ENCODE measurements at regions of chr10 and their contacts with region 1.

Region 1: DNA sequence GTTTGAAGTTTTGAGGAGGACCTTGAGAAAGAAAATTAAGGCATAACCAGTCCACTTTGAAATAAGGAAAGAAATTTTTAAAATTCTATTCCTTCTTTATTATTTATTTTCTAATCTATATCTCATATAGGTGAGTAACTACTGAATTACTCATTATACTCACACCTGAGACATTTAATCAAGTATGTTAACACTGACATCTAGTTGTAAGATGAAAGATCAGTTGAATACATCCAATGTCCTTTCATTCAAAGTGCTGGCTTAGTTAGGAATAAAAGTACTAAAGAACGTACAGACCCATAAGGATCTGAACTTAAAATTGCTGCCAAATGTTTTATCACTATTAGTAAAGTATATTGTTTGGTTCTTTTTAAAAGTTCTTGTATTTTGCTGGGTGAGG is 23.5 kb downstream of the TRDMT1 start:
- DNase-seq: no peak
- ATAC-seq: no peak
- H3K4me3 ChIP-seq: no peak overlapping the region
- H3K27ac ChIP-seq: no peak overlapping the region
- H3K4me1 ChIP-seq: no peaks in the 10 kb centered on the region
- H3K27me3 ChIP-seq: no peaks in the 10 kb centered on the region
- CTCF ChIP-seq: no peak

Region 2: DNA sequence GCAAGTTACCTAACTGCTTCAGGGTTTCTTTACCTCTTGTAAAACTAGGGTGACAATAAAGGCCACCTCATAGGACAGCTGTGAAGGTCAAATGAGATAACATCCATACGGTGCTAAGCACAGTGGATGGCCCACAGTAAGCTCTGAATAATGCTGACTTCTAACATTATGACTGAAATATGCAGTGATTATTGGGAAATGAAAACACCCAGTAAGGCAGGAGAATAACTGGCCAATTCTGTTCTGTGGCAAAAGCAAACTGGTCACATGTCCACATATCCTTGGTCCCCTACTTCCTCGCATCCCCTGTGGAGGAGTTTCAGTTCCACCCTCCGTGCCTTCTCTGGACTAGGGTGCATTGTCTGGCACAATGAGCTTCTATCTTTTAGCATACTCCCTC is 49.7 kb before region 1 on chr10:
- intact Hi-C with region 1: no loop called
- DNase-seq: no peak
- ATAC-seq: no peak
- H3K4me3 ChIP-seq: no peak overlapping the region
- H3K27ac ChIP-seq: no peak overlapping the region
- H3K4me1 ChIP-seq: no peaks in the 10 kb centered on the region
- H3K27me3 ChIP-seq: no peaks in the 10 kb centered on the region
- CTCF ChIP-seq: no peak

Region 3: DNA sequence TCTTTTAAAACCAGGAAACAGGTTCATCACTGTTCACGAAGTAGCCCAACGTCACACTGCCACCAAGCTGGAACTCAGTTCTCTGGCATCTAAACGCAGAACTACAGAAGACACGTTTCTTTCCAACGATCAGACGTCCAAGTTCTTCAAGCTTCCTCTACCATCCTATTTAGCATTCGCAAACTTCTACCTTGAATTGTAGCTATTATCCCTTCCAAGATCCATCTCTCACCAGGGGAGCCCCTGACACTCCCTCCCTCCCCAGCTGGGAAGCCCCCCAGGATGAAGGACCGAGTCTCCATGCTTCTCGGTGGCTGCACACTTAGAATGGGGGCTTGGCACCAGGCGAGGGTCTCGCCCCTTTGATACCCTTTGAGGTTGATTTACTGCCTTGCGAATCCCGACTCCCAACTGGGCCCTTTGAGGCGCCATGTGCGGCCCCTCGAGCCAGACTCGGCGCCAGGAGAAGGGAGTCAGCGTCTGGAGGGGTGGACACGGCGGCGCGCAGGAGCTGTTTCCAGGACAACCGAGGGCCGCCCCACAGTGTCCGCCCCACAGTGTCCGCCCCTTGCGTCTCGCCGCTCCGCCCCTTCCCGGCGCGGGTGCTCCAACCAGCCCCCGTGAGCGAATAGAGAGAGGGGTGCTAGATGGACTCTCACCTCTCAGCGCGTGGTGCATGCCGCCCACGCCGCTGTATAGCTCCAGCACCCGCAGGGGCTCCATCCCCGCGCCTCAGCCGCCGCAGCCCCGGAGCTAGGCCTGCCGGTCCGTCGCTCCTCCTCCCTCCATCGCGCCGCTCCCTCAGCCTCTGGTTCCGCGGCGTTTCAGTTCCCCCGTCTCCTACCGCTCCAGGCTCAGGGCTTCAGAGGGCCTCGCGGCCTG is 23.1 kb after region 1 on chr10 and contains the start of gene TRDMT1:
- intact Hi-C with region 1: loop called in 1 of 2 experiments (anchors 1 kb)
- DNase-seq: peak; percentile 88 to 93
- ATAC-seq: peak; percentile 99 to 100 (median 99)
- H3K4me3 ChIP-seq: peak within 1 kb of the TSS; percentile 94
- H3K27ac ChIP-seq: peak within 1 kb of the TSS; percentile 92
- H3K4me1 ChIP-seq: peaks cover 12% of the 10 kb centered on the region
- H3K27me3 ChIP-seq: no peaks in the 10 kb centered on the region
- CTCF ChIP-seq: no peak
- total RNA-seq, gene TRDMT1: 0.84 to 2.7 (median 1.9) TPM

Region 4: GRCh38 chr10:17725703-17726102 is 547.7 kb after region 1 on chr10:
- intact Hi-C with region 1: no loop called
- DNase-seq: no peak
- ATAC-seq: no peak
- H3K4me3 ChIP-seq: no peak overlapping the region
- H3K27ac ChIP-seq: no peak overlapping the region
- H3K4me1 ChIP-seq: peaks cover 9% of the 10 kb centered on the region
- H3K27me3 ChIP-seq: no peaks in the 10 kb centered on the region
- CTCF ChIP-seq: no peak